Left lung (tissue), 14 donors: ENCODE measurements at regions of chr1 and their contacts with region 1.

Region 1: GRCh38 chr1:153827168-153827964 is 52.2 kb downstream of the SLC27A3 start:
- DNase-seq: no peak
- ATAC-seq: no peak
- H3K4me3 ChIP-seq: no peak overlapping the region
- H3K27ac ChIP-seq: no peak overlapping the region
- H3K4me1 ChIP-seq: no peaks in the 10 kb centered on the region
- H3K27me3 ChIP-seq: no peaks in the 10 kb centered on the region
- CTCF ChIP-seq: no peak

Region 2: GRCh38 chr1:153946622-153947241 is 119.4 kb after region 1 on chr1 and contains the start of gene DENND4B:
- intact Hi-C with region 1: loop called in 1 of 2 experiments (anchors 10 kb)
- DNase-seq: peak in 3 of 4 donors; percentile 88 to 97 (median 90)
- ATAC-seq: peak; percentile 89
- H3K4me3 ChIP-seq: peak within 1 kb of the TSS; percentile 85 to 96
- H3K27ac ChIP-seq: peak within 1 kb of the TSS; percentile 97 to 99
- H3K4me1 ChIP-seq: peaks cover 4 to 43% of the 10 kb centered on the region in 2 donors
- H3K27me3 ChIP-seq: no peaks in the 10 kb centered on the region
- CTCF ChIP-seq: peak; percentile 95 to 96
- polyA plus RNA-seq, gene DENND4B: 41.3 to 63.3 (median 47.4) TPM